ENCODE measurements at regions of chr7 and their contacts with region 1.

Region 1: GRCh38 chr7:25894902-25895791 is 256.9 kb upstream of the NFE2L3 start:
- DNase-seq: peak; percentile 81
- ATAC-seq: peak; percentile 63
- H3K4me3 Mint-ChIP-seq: peak overlapping the region; percentile 47
- H3K27ac Mint-ChIP-seq: no peak overlapping the region
- H3K4me1 Mint-ChIP-seq: peaks cover 28% of the 10 kb centered on the region
- H3K27me3 Mint-ChIP-seq: peaks cover 2% of the 10 kb centered on the region

Region 2: DNA sequence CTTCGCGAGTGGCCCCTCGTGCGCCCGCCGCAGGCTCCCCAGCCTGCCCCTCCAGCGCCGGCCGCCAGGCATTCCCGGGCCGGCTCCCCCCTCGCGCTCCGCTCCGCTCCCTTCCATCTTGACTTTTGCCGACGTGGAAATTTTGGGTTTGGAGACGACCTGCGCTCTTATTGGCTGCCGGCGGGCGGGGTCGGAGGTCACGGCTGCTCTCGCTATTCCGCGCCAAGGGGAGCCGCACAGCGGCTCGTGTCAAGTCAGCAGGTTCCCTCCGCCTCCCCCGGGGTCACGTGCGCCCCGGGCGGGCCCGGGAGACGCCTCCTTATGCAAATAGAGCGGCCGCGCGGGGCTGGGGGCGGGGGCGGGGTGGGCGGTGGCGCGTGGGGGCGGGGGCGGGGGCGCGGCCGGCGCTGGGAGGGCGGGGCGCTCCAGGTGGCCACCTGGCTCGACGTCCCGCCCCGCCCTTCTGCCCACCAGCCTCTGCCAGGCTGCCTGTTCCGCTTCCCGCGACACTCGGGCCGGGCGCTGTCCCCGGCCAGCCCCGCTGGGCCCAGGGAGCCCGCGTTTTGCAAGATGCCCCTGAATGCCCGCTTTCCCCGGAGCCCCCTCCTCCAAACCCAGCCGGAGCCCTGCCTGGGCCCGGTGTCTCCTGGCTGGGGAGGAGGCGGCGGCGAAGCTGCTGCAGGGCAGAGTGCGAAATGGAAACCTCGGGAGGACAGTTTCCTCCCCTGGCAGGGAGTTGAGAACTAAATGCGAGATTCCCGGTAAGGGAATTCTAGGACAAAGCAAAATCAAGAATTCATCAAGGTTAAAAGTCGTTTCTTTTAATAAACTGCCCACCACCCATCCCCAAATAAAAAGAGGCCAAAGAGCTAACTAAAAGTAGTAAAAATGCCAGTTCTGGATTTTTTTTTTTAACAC is 56.1 kb after region 1 on chr7:
- CTCF ChIA-PET with region 1: interaction called, 5 read pairs
- POLR2A ChIA-PET with region 1: no interaction called
- intact Hi-C with region 1: loop called (anchors 1 to 5 kb)
- DNase-seq: peak; percentile 94
- ATAC-seq: peak; percentile 99
- H3K4me3 Mint-ChIP-seq: peak overlapping the region; percentile 80
- H3K27ac Mint-ChIP-seq: peak overlapping the region; percentile 72
- H3K4me1 Mint-ChIP-seq: peaks cover 17% of the 10 kb centered on the region
- H3K27me3 Mint-ChIP-seq: no peaks in the 10 kb centered on the region

Region 3: GRCh38 chr7:26078437-26079336 is 183.5 kb after region 1 on chr7:
- CTCF ChIA-PET with region 1: interaction called, 9 read pairs
- POLR2A ChIA-PET with region 1: no interaction called
- intact Hi-C with region 1: loop called (anchors 5 kb)
- DNase-seq: peak; percentile 90
- ATAC-seq: peak; percentile 99
- H3K4me3 Mint-ChIP-seq: no peak overlapping the region
- H3K27ac Mint-ChIP-seq: no peak overlapping the region
- H3K4me1 Mint-ChIP-seq: peaks cover 3% of the 10 kb centered on the region
- H3K27me3 Mint-ChIP-seq: peaks cover 13% of the 10 kb centered on the region

Region 4: GRCh38 chr7:26187380-26188205 is 292.4 kb after region 1 on chr7:
- CTCF ChIA-PET with region 1: interaction called, 12 read pairs
- POLR2A ChIA-PET with region 1: interaction called, 3 read pairs
- intact Hi-C with region 1: loop called in 1 of 2 experiments (anchors 5 kb)
- DNase-seq: no peak
- ATAC-seq: peak; percentile 21
- H3K4me3 Mint-ChIP-seq: peak overlapping the region; percentile 14
- H3K27ac Mint-ChIP-seq: peak overlapping the region; percentile 77
- H3K4me1 Mint-ChIP-seq: peaks cover 68% of the 10 kb centered on the region
- H3K27me3 Mint-ChIP-seq: no peaks in the 10 kb centered on the region

Region 5: GRCh38 chr7:26365077-26365900 is 470.1 kb after region 1 on chr7:
- CTCF ChIA-PET with region 1: interaction called, 46 read pairs
- POLR2A ChIA-PET with region 1: no interaction called
- intact Hi-C with region 1: loop called (anchors 1 kb)
- DNase-seq: peak; percentile 60
- ATAC-seq: peak; percentile 61
- H3K4me3 Mint-ChIP-seq: no peak overlapping the region
- H3K27ac Mint-ChIP-seq: no peak overlapping the region
- H3K4me1 Mint-ChIP-seq: peaks cover 8% of the 10 kb centered on the region
- H3K27me3 Mint-ChIP-seq: no peaks in the 10 kb centered on the region

Region 6: GRCh38 chr7:26686448-26686981 is 791.4 kb after region 1 on chr7:
- CTCF ChIA-PET with region 1: interaction called, 5 read pairs
- POLR2A ChIA-PET with region 1: no interaction called
- intact Hi-C with region 1: loop called in 1 of 2 experiments (anchors 5 kb)
- DNase-seq: no peak
- ATAC-seq: no peak
- H3K4me3 Mint-ChIP-seq: no peak overlapping the region
- H3K27ac Mint-ChIP-seq: no peak overlapping the region
- H3K4me1 Mint-ChIP-seq: no peaks in the 10 kb centered on the region
- H3K27me3 Mint-ChIP-seq: peaks cover 16% of the 10 kb centered on the region